RWPE1 (cell line): ENCODE measurements at regions of chr5 and their contacts with region 1.

Region 1: DNA sequence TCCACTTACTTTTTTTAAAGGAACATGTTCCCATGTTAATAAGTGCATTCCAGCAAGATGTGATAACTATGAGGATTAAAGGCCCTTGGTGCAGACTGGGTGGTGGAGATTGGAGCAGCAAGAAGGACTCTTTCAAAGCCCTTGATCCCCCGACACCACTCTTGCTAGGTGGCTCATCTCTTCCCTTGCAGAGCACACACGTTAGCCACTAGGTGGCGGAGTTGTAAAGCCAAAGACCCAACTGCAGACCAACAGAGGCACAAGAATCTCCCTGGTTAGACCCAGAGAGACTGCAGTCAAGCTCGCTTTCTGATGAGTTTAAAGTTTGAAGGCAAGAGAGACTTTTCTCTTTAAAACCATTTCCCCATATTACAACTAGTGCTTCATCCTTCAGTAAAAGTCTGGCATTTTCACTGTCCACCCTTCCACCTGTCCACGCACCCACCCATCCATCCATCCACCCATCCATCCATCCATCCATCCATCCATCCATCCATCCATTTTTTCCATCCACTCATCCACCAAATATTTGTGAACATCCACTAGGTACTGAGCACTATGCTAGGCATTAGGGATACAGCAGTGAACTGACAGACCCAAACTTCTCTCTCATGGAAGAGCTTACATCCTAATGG is 226.9 kb downstream of the MSX2 start:
- DNase-seq: peak; percentile 84
- H3K27ac ChIP-seq: no peak overlapping the region
- CTCF ChIP-seq: peak; percentile 89

Region 2: DNA sequence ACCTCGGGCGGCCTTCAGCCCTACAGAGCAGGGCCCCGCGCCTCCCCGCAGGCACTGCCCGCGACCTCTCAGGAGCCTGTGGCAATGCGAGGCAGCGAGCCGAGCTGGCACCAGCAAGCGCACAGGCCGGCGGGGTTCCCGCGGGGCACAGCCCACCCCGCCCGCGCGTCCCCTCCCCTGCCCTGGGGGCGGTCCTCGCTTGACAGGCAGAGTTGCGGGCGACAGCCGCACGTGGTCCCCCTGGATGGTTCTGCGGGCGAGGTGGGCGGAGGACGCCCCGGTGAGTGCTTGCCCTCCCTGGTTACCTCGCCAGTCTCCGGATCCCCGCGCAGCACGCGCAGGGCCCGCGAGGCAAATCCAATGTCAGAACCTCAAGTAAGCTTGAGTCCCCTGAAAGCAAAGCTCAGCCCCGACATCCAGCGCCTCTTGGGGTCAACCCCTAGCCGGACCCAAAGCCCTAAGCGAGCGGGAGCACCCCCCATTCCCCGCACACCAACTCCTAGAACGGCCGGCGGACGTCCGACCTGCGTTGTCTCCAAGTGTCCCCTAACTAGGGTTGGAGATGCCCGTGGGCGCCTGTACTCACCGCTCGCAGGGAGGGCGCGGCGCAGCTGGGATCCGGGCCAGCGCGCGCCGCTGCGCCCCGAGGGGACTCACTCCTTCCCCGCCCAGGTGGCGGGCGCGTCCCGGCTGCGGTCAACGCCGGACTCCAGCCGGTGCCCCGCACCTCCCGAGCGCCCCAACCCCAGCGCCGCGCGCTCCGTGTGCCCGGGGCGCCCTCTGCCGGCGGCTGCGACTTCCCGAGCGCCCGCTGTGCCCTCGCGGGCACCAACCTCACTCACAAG is 493.0 kb after region 1 on chr5 and contains the start of gene DRD1:
- CTCF ChIA-PET with region 1: interaction called, 15 read pairs
- POLR2A ChIA-PET with region 1: no interaction called
- DNase-seq: peak; percentile 61
- H3K27ac ChIP-seq: no peak within 1 kb of the TSS
- CTCF ChIP-seq: peak; percentile 84